ENCODE measurements at regions of chr6 and their contacts with region 1.

Region 1: GRCh38 chr6:27539521-27539920 is 66.6 kb upstream of the ZNF184 start:
- DNase-seq: no peak
- ATAC-seq: no peak
- H3K4me3 Mint-ChIP-seq: no peak overlapping the region
- H3K27ac Mint-ChIP-seq: no peak overlapping the region
- H3K4me1 Mint-ChIP-seq: peaks cover under 1% of the 10 kb centered on the region
- H3K27me3 Mint-ChIP-seq: peaks cover 55% of the 10 kb centered on the region

Region 2: GRCh38 chr6:27565821-27566766 is 26.6 kb after region 1 on chr6:
- CTCF ChIA-PET with region 1: interaction called, 5 read pairs
- POLR2A ChIA-PET with region 1: no interaction called
- intact Hi-C with region 1: loop called in 1 of 2 experiments (anchors 5 kb)
- DNase-seq: peak; percentile 14
- ATAC-seq: peak; percentile 55
- H3K4me3 Mint-ChIP-seq: peak overlapping the region; percentile 3
- H3K27ac Mint-ChIP-seq: no peak overlapping the region
- H3K4me1 Mint-ChIP-seq: peaks cover 6% of the 10 kb centered on the region
- H3K27me3 Mint-ChIP-seq: peaks cover 58% of the 10 kb centered on the region